Dorsolateral prefrontal cortex (tissue), 120 donors: ENCODE measurements at regions of chr12 and their contacts with region 1.

Region 1: GRCh38 chr12:56315622-56316473 is at the start of gene CNPY2:
- DNase-seq: peak; percentile 74 to 97 (median 92)
- H3K4me3 ChIP-seq: peak within 1 kb of the TSS; percentile 64 to 100 (median 92)
- H3K27ac ChIP-seq: peak within 1 kb of the TSS; percentile 67 to 100 (median 96)
- H3K27me3 ChIP-seq: no peaks in the 10 kb centered on the region
- CTCF ChIP-seq: peak in 39 of 56 donors; percentile 5 to 60 (median 25)
- total RNA-seq, gene CNPY2: 65.8 to 125 (median 92.3) TPM

Region 2: DNA sequence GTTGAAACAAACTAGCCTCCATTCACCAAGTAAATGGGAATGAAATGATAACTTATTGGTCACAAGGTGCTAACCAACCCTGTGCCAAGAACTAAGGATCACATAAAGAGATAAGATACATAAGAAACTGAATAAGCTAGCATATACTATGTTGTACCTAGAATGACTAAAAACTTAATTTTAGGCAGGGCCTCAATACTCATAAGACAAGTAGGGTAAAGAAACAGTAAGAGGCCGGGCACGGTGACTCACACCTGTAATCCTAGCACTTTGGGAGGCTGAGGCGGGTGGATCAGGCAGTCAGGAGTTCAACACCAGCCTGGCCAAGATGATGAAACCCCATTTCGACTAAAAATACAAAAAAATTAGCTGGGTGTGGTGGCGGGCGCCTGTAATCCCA is 555.2 kb before region 1 on chr12:
- intact Hi-C with region 1: no loop called
- DNase-seq: no peak
- H3K4me3 ChIP-seq: no peak overlapping the region
- H3K27ac ChIP-seq: no peak overlapping the region
- H3K27me3 ChIP-seq: no peaks in the 10 kb centered on the region
- CTCF ChIP-seq: no peak

Region 3: DNA sequence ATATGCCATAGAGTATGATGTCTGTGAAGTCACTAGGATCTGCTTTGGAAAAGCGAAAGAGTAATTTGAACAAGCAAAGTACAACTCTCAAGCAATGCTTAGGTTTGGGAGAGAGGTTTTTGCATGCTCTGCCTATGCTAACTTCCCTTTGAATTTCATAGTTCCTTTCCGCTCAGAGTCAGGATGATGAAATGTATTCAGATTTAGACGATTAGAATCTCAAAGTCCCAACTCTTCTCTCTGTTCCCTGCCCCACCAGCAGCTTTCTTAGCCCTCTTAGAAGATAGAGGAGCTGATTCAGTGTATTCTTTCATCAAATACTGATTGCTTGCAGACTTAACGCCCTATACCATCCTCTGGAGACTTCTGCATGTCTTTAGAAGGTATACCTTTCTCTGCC is 330.5 kb before region 1 on chr12:
- intact Hi-C with region 1: no loop called
- DNase-seq: no peak
- H3K4me3 ChIP-seq: no peak overlapping the region
- H3K27ac ChIP-seq: no peak overlapping the region
- H3K27me3 ChIP-seq: no peaks in the 10 kb centered on the region
- CTCF ChIP-seq: no peak

Region 4: DNA sequence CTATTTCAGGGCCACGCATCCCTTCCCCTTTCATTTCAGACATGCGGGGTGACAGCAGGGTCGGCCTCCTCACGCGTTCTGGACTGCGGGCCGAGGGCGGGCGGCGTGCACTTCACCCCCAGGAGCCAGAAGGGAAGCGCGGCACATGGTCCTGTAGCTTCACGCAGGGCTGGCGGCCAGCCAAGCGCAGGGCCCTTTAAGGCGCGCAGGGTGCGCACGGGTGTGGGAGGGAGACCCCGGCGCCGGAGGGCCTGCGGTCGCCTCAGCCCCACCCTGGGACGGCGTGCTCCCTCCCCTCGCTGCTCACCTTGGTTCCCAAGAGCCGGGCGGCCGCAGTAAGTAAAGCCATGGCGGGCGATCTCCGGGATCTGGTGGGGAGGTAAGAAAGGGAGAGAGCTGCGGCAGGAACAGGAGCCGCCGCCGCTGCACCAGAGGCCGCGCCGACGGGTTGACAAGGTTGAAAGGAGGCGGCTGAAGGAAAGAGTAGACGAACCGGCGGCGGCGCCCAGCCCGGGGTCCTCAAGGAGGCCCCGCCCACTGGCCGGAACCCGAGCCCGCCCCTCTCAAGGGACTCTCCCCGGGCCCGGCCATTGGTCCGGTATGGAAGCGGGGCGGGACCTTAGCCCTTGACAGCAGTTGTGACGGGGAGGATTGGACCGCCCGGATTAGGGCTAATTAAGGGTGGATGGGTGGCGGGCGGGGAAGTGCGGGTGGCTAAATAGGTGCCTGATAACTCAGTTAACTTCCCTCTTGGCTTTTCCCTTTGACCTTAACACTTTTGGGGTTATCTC is 15.8 kb before region 1 on chr12 and contains the start of gene CS:
- intact Hi-C with region 1: loop called in 1 of 2 experiments (anchors 2 kb)
- DNase-seq: peak; percentile 96 to 99 (median 99)
- H3K4me3 ChIP-seq: peak within 1 kb of the TSS; percentile 70 to 99 (median 91)
- H3K27ac ChIP-seq: peak within 1 kb of the TSS; percentile 59 to 98 (median 91)
- H3K27me3 ChIP-seq: no peaks in the 10 kb centered on the region
- CTCF ChIP-seq: peak in 22 of 56 donors; percentile 3 to 49 (median 23)
- total RNA-seq, gene CS: 122 to 244 (median 194) TPM

Region 5: GRCh38 chr12:56359851-56360767 is 44.3 kb after region 1 on chr12 and contains the start of gene STAT2:
- intact Hi-C with region 1: loop called in 1 of 2 experiments (anchors 1 kb)
- DNase-seq: peak; percentile 95 to 99 (median 99)
- H3K4me3 ChIP-seq: peak within 1 kb of the TSS; percentile 62 to 99 (median 86)
- H3K27ac ChIP-seq: peak within 1 kb of the TSS; percentile 48 to 99 (median 93)
- H3K27me3 ChIP-seq: no peaks in the 10 kb centered on the region
- CTCF ChIP-seq: peak in 51 of 56 donors; percentile 3 to 70 (median 40)
- total RNA-seq, gene STAT2: 94.6 to 278 (median 154) TPM

Region 6: GRCh38 chr12:56461235-56462159 is 145.6 kb after region 1 on chr12:
- intact Hi-C with region 1: loop called in 1 of 2 experiments (anchors 5 kb)
- DNase-seq: no peak
- H3K4me3 ChIP-seq: no peak overlapping the region
- H3K27ac ChIP-seq: no peak overlapping the region
- H3K27me3 ChIP-seq: no peaks in the 10 kb centered on the region
- CTCF ChIP-seq: no peak